HEK293T (cell line): ENCODE measurements at regions of chrX and their contacts with region 1.

Region 1: GRCh38 chrX:136185409-136186022 is 38.2 kb downstream of the FHL1 start:
- DNase-seq: no peak

Region 2: DNA sequence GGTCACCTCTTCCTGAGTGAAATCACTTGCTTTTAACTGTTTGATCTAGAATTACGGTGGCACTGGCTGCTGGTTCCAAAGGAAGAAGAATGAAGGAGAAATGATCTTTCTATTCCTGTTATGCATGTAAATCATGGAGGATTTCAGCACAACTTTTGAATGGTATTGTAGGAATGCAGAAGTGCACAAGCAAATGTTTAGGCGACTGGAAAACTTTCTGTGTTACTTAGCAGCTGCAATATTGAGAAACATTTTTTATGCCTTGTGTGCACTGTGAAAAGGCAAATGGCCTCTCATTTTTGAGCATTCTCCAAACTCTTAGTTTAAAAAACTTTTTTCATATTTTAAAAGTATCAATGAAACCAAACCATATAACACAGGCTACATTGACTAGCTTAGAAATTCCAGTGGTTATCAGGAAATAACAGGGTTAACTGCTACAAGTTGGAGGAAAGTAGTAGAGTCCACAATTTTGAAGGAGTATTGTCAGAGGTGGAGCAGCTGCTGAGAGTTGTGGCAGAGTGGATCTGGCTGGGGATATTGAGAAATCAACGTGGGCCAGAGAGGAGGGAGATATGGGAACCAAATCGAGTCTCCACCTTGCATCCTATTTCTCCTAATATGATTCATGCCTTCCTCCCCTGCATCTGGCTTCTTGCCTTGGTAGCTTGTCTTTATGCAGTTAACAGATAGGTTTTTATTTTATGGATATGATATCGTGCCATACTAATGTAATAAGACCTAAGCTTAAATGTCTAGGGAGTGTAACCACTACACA is 70.2 kb before region 1 on chrX:
- CTCF ChIA-PET with region 1: no interaction called
- POLR2A ChIA-PET with region 1: no interaction called
- DNase-seq: no peak

Region 3: DNA sequence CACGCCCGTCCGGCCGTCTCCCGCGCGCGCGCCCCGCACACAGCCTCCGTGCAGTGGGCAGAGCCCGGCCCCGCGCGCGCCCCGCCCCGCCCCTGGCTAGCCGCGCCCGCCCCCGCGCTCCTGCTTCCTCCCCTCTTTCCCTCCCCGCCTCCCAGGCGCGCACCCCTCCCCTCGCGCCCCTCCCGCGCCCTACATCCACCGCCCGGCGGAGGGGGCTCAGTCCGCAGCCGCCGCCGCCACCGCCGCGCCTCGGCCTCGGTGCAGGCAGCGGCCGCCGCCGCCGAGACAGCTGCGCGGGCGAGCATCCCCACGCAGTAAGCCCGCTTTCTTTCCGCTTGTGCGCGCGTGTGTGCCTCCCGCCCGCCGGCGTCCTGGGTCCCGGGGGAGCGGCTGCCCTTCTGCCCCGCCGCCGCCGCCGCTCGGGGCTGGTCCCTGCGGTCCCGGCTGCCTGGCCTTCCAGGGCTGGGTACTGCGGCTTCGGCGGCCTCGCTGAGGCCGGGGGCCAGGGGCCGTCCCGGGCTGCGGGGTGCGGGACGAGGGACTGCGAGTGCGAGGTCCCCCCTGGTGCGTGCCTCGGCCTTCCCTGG is 38.1 kb before region 1 on chrX and contains the start of gene FHL1:
- CTCF ChIA-PET with region 1: no interaction called
- POLR2A ChIA-PET with region 1: no interaction called
- DNase-seq: peak; percentile 79

Region 4: GRCh38 chrX:136196691-136197155 is 11.2 kb after region 1 on chrX:
- CTCF ChIA-PET with region 1: interaction called, 3 read pairs
- POLR2A ChIA-PET with region 1: interaction called, 10 read pairs
- DNase-seq: no peak

Region 5: GRCh38 chrX:136260771-136261170 is 75.3 kb after region 1 on chrX:
- CTCF ChIA-PET with region 1: no interaction called
- POLR2A ChIA-PET with region 1: no interaction called
- DNase-seq: no peak